Activated CD8-positive, alpha-beta T cell treated with anti-CD3 and anti-CD28 coated beads, Interleukin-2, amount 10 ng/mL, durations not matched to agents 7 days and 5 days (primary cell): ENCODE measurements at regions of chr1 and their contacts with region 1.

Region 1: DNA sequence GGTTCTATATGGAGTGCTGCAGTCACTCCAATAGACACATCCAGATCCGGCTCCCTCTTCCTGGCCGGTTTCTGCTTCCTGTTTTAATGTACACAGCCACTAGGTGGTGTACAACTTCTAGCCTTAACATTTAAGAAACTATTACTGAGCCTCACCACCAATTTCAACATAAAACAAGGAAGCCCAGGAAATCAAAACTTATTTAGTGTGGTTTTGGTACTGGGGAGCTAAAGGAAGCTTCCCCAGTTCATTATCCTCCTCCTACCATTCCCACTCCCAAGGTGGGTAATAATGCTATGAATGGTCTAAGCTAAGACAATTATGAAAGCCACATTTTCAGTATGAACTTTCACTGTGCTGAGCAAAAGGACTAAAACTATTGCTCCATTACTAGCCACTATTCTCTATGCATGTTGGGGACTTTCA is 25.5 kb upstream of the MTMR11 start:
- DNase-seq: peak; percentile 62
- ATAC-seq: peak; percentile 91
- H3K4me3 Mint-ChIP-seq: no peak overlapping the region
- H3K27ac Mint-ChIP-seq: no peak overlapping the region
- H3K4me1 Mint-ChIP-seq: peaks cover 16% of the 10 kb centered on the region
- H3K27me3 Mint-ChIP-seq: no peaks in the 10 kb centered on the region

Region 2: DNA sequence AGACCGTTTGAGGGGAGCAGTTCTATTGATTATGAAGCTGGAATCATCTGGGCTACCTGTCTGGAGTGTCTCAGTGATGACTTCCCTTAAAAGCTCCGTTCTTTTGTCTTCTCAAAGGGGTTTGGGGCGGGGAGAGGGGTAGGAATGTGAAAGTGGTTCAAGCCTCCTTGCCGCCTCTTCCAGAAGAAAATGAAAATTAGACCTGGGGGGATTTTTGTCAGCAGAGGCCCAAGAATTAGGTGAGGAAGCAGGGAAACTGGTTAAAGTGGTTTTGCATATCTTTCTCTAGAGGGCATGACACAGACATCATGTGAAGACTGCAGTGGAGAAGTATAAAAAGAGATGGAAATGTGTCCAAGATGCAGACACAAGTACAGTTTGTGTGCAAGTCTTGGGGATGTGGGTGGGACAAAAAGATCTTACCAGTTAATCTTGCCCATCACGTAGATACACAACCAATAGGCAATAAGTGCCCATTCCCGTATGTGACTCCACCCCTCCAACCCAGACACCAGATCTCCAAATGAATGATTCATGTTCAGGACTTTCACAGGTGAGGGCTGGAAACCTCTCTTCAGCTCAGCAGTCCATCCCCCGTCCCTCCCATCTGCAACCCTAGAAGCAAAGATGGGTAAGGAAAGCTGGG is 25.0 kb before region 1 on chr1:
- CTCF ChIA-PET with region 1: interaction called, 11 read pairs
- POLR2A ChIA-PET with region 1: no interaction called
- DNase-seq: no peak
- ATAC-seq: no peak
- H3K4me3 Mint-ChIP-seq: no peak overlapping the region
- H3K27ac Mint-ChIP-seq: peak overlapping the region; percentile 65
- H3K4me1 Mint-ChIP-seq: peaks cover 38% of the 10 kb centered on the region
- H3K27me3 Mint-ChIP-seq: no peaks in the 10 kb centered on the region

Region 3: DNA sequence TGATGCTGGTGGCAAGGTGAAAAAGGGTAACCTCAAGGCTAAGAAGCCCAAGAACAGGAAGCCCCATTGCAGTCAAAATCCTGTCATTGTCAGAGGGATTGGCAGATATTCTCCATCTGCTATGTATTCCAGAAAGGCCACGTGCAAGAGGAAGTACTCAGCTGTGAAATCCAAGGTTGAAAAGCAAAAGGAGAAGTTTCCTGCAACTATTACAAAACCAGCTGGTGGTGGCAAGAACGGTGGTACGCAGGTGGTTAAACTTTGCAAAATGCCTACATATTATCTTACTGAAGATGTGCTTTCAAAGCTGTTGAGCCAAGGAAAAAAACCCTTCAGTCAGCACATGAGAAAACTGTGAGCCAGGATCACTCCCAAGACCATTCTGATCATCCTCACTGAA is 91.8 kb after region 1 on chr1:
- CTCF ChIA-PET with region 1: interaction called, 30 read pairs
- POLR2A ChIA-PET with region 1: interaction called, 3 read pairs
- DNase-seq: no peak
- ATAC-seq: no peak
- H3K4me3 Mint-ChIP-seq: no peak overlapping the region
- H3K27ac Mint-ChIP-seq: no peak overlapping the region
- H3K4me1 Mint-ChIP-seq: peaks cover 6% of the 10 kb centered on the region
- H3K27me3 Mint-ChIP-seq: peaks cover 11% of the 10 kb centered on the region

Region 4: GRCh38 chr1:150118716-150119115 is 156.6 kb after region 1 on chr1:
- CTCF ChIA-PET with region 1: no interaction called
- POLR2A ChIA-PET with region 1: no interaction called
- DNase-seq: no peak
- ATAC-seq: peak; percentile 44
- H3K4me3 Mint-ChIP-seq: no peak overlapping the region
- H3K27ac Mint-ChIP-seq: no peak overlapping the region
- H3K4me1 Mint-ChIP-seq: peaks cover 2% of the 10 kb centered on the region
- H3K27me3 Mint-ChIP-seq: no peaks in the 10 kb centered on the region